PC-3 (cell line): ENCODE measurements at regions of chr1 and their contacts with region 1.

Region 1: DNA sequence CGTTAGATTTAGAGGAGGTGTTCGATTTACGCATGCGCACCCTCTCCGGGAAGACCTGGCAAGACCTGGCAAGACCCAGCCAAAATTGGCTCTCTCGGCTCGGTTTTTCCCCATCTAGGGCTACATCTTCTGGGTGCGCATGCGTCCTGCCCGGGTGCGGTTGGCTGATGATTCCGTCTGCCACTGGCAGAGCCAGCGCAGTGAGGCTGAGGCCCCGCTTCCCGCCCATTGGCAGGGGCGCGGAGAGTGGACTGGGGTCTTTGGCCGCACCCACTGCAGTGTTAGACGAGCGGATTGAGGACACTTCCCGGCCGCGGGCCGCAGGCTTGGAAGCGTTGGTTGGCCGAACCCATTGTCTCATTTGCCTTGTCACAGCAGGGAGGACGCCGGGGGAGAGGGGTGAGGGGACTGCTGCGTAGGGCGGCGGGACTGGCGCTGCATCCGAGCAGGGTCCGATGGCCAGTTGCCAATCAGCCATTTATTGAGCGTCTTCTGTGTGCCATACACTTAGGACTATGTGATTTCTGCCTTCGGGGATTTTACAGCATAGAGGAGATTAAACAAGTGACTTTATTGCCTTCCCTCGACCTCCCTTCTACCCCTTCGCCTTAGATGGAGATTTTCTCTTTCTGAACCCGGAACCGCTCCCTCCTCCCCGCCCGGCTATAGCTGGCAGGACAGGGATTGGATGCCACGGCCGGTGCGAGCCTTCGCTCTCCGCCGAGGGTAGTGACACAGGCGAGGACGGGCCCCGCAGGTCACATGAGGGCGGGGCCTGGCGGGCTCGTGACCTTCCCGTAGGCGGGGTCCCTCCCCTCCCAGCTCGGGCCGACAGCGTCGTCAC is 43.7 kb downstream of the MEF2D start:
- DNase-seq: peak; percentile 100
- ATAC-seq: peak; percentile 86
- H3K4me3 ChIP-seq: peak overlapping the region; percentile 63
- H3K27ac ChIP-seq: peak overlapping the region; percentile 87
- H3K4me1 ChIP-seq: peaks cover 19% of the 10 kb centered on the region
- H3K27me3 ChIP-seq: no peaks in the 10 kb centered on the region
- CTCF ChIP-seq: no peak

Region 2: DNA sequence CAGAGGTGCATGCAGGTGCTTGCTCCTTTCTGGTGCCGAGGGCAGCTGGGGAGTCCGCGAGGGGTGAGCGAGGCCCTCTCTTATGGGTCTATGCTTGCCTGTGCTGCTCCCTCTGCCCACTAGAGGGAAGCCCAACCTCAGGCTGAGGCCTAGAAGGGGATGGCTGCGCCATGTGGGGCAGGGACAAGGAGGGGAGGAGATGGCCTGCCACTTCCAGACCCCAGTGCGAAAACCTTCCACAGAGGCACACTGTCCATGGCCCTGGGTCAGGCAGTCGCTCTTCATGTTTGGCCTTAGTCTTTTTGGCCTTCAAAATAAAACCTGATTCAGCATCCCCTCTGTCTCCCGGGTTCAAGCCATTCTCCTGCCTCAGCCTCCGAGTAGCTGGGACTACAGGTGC is 73.8 kb before region 1 on chr1:
- CTCF ChIA-PET with region 1: interaction called, 20 read pairs
- POLR2A ChIA-PET with region 1: no interaction called
- intact Hi-C with region 1: no loop called
- DNase-seq: peak; percentile 86
- ATAC-seq: peak; percentile 95
- H3K4me3 ChIP-seq: no peak overlapping the region
- H3K27ac ChIP-seq: no peak overlapping the region
- H3K4me1 ChIP-seq: peaks cover 12% of the 10 kb centered on the region; the same call in 1 of the 2 replicates
- H3K27me3 ChIP-seq: no peaks in the 10 kb centered on the region
- CTCF ChIP-seq: peak; percentile 95

Region 3: GRCh38 chr1:156445789-156446263 is 11.0 kb before region 1 on chr1:
- CTCF ChIA-PET with region 1: interaction called, 13 read pairs
- POLR2A ChIA-PET with region 1: no interaction called
- intact Hi-C with region 1: no loop called
- DNase-seq: peak; percentile 96
- ATAC-seq: peak; percentile 90
- H3K4me3 ChIP-seq: no peak overlapping the region
- H3K27ac ChIP-seq: no peak overlapping the region
- H3K4me1 ChIP-seq: peaks cover 12% of the 10 kb centered on the region
- H3K27me3 ChIP-seq: peaks cover 13% of the 10 kb centered on the region
- CTCF ChIP-seq: peak; percentile 97

Region 4: DNA sequence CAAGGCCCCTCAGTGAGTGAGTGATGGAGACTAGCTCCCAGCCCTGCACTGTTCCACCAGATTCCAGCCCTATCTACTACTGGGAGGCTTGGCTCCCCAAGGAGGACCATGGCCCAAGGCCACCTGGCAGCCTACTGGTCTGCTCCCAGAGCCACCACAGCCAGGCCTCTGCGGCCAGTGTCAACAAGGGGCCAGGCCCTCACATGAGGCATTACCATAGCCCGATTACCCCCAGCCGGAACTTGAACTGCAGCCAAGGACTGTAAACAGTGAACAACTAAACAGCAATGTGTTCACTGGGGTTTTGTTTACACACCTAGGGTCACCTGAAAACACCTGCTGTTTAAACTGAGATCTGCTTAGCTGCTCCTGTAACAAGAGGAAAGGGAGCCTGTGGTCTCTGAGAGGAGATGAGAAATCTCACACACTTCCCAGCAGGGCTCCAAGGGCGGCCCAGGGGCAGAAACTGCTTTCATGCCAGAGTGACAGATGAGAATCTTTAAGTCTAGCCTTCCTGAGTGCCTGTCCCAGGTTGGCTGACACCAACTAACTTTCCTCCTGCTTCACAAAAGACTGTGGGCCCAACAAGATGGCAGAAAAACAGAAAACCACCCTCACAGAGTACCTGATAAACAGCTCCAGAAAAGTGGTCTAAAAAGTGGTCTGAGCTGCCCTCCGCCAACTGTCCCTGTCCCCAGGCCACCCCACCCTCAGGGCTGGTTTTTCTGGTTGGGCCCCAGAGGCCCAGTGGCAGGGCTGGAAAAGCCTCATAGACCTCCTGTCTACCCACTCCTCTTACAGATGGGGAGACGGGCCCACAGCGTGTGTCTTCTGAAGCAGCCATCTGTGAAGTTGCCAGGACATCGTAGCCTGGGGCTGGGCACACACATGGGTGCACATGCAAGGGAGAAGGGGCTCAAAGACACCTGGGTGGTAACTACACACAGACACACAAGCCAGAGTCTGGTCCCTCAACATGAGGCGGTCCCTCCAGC is 14.9 kb after region 1 on chr1:
- CTCF ChIA-PET with region 1: no interaction called
- POLR2A ChIA-PET with region 1: interaction called, 5 read pairs
- intact Hi-C with region 1: loop called (anchors 1 kb)
- DNase-seq: peak; percentile 98
- ATAC-seq: peak; percentile 90
- H3K4me3 ChIP-seq: peak overlapping the region; percentile 21; the same call in 1 of the 2 replicates
- H3K27ac ChIP-seq: peak overlapping the region; percentile 61
- H3K4me1 ChIP-seq: peaks cover 21% of the 10 kb centered on the region
- H3K27me3 ChIP-seq: no peaks in the 10 kb centered on the region
- CTCF ChIP-seq: no peak

Region 5: GRCh38 chr1:156500797-156501499 is 44.1 kb after region 1 on chr1:
- CTCF ChIA-PET with region 1: interaction called, 21 read pairs
- POLR2A ChIA-PET with region 1: interaction called, 16 read pairs
- intact Hi-C with region 1: loop called (anchors 1 kb)
- DNase-seq: peak; percentile 97
- ATAC-seq: peak; percentile 60
- H3K4me3 ChIP-seq: peak overlapping the region; percentile 95
- H3K27ac ChIP-seq: peak overlapping the region; percentile 96
- H3K4me1 ChIP-seq: peaks cover 74% of the 10 kb centered on the region
- H3K27me3 ChIP-seq: no peaks in the 10 kb centered on the region
- CTCF ChIP-seq: peak; percentile 83

Region 6: DNA sequence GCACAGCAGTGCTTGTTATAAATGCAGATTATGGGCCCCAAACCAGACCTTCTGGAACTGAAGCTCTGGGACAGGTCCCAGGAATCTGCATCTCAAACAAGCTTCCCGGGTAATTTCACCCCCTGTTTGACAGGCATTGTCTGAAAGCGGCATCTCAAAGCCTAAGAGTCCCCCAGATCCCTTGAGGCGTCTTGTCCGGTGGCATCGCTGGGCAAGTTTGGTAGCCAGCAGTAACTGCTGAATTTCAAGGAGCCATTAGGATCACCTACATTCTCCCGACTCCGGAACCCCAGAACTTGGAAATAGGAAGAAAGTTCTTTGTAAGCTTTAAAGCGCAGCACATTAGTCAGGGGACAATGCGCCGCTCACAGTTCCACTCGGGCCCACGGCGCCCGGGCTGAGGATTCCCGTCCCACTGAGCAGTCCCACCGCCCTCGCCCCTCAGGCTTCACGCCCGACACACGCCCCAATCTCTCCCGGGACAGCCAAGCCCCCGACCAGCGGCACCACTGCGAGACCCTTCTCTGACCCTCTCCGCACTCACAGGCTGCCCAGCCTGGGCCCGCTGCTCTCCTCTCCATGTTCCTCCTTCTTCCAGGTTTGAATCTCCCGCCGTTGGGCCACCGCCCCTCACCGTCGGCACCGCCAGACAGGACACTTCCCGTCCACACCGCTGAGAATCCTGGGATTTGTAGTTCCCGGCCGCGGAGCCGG is 115.3 kb after region 1 on chr1 and contains the start of gene IQGAP3:
- CTCF ChIA-PET with region 1: interaction called, 3 read pairs
- POLR2A ChIA-PET with region 1: interaction called, 4 read pairs
- intact Hi-C with region 1: loop called (anchors 1 kb)
- DNase-seq: peak; percentile 94
- ATAC-seq: peak; percentile 86
- H3K4me3 ChIP-seq: peak within 1 kb of the TSS; percentile 99
- H3K27ac ChIP-seq: peak within 1 kb of the TSS; percentile 62
- H3K4me1 ChIP-seq: peaks cover 19% of the 10 kb centered on the region
- H3K27me3 ChIP-seq: no peaks in the 10 kb centered on the region
- CTCF ChIP-seq: no peak
- total RNA-seq, gene IQGAP3: 54.3 and 77.3 TPM in 2 replicates

Region 7: GRCh38 chr1:156608036-156608674 is 151.3 kb after region 1 on chr1:
- CTCF ChIA-PET with region 1: interaction called, 3 read pairs
- POLR2A ChIA-PET with region 1: no interaction called
- intact Hi-C with region 1: loop called (anchors 1 kb)
- DNase-seq: peak; percentile 87
- ATAC-seq: peak; percentile 98
- H3K4me3 ChIP-seq: no peak overlapping the region
- H3K27ac ChIP-seq: no peak overlapping the region
- H3K4me1 ChIP-seq: no peaks in the 10 kb centered on the region
- H3K27me3 ChIP-seq: no peaks in the 10 kb centered on the region
- CTCF ChIP-seq: peak; percentile 92

Region 8: DNA sequence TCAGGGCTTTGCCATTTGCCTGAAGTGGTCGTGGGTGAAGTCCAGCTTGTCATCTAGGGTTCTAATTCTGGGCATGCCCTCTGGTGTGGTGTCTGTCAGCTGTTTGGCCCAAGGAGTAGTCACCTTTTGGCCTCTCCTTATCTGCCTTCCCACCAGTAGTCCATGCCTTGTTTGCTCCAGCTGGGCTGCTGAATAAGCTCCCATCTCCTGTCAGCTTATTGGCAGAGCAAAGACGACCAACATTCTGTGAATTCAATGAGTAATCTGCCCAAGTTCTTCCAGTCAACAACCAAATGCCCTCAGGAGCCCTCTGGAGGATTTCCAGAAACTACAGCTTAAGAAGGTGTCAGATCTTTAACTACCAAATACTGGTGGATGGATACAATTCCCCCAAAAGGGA is 192.1 kb after region 1 on chr1:
- CTCF ChIA-PET with region 1: no interaction called
- POLR2A ChIA-PET with region 1: no interaction called
- intact Hi-C with region 1: no loop called
- DNase-seq: peak; percentile 62
- ATAC-seq: 0 out of 2 replicates have a peak, but pooled peaks have one; percentile 14
- H3K4me3 ChIP-seq: no peak overlapping the region
- H3K27ac ChIP-seq: no peak overlapping the region
- H3K4me1 ChIP-seq: no peaks in the 10 kb centered on the region
- H3K27me3 ChIP-seq: no peaks in the 10 kb centered on the region
- CTCF ChIP-seq: no peak